IMR-90 (cell line): ENCODE measurements at regions of chr2 and their contacts with region 1.

Region 1: DNA sequence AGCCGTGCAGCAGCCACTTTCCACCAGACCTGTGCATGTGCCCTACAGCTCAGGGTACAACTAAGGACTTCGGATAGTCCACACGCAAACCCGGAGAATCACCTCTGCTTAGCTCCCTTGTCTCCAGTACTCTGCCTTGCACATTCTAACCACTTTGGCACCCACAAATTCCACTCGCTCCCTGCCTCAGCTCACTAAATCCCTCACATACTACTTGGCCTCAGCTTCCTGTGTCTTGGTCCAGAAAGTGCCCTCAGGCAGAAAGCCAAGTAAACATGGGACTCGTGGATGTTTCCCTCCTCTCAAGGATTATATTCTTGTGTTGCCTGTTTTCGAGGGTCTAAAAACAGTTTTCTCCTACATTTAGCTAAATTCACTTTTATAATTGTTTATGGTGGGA is 157.8 kb upstream of the DAPL1 start:
- DNase-seq: no peak
- ATAC-seq: no peak; the same call in 1 of the 2 replicates
- H3K4me3 ChIP-seq: no peak overlapping the region
- H3K27ac ChIP-seq: no peak overlapping the region
- H3K4me1 ChIP-seq: peaks cover 4% of the 10 kb centered on the region; the same call in 1 of the 2 replicates
- H3K27me3 ChIP-seq: no peaks in the 10 kb centered on the region
- CTCF ChIP-seq: no peak
- POLR2A ChIP-seq: no peak
- RAD21 ChIP-seq: no peak

Region 2: GRCh38 chr2:158619496-158619895 is 17.9 kb before region 1 on chr2:
- CTCF ChIA-PET with region 1: interaction called, 3 read pairs
- POLR2A ChIA-PET with region 1: no interaction called
- dilution Hi-C with region 1: no loop called
- in situ Hi-C with region 1: no loop called
- intact Hi-C with region 1: loop called (anchors 2 kb)
- DNase-seq: peak; percentile 57
- ATAC-seq: peak; percentile 74
- H3K4me3 ChIP-seq: no peak overlapping the region
- H3K27ac ChIP-seq: no peak overlapping the region
- H3K4me1 ChIP-seq: no peaks in the 10 kb centered on the region; the same call in 1 of the 2 replicates
- H3K27me3 ChIP-seq: no peaks in the 10 kb centered on the region
- CTCF ChIP-seq: no peak
- POLR2A ChIP-seq: no peak
- RAD21 ChIP-seq: no peak

Region 3: DNA sequence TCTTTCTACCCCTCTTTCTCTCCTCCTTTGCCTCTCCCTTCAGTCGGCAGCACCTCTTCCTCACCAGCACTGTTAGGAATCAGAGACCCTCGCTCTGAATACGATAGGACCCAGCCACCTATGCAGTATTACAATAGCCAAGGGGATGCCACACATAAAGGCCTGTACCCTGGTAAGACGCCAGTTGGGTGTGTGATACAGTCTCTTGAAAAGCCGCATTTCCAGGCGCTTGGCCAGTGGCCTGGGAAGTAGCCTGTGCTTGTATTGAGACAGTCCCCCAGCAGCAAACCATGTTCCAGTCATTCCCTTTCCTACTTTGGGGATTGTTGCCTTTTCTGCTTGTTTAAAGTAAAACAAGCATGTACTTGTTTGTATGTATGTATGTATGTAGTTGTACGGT is 39.3 kb after region 1 on chr2:
- CTCF ChIA-PET with region 1: no interaction called
- POLR2A ChIA-PET with region 1: no interaction called
- dilution Hi-C with region 1: no loop called
- in situ Hi-C with region 1: no loop called
- intact Hi-C with region 1: no loop called
- DNase-seq: no peak
- ATAC-seq: no peak
- H3K4me3 ChIP-seq: no peak overlapping the region
- H3K27ac ChIP-seq: no peak overlapping the region
- H3K4me1 ChIP-seq: no peaks in the 10 kb centered on the region
- H3K27me3 ChIP-seq: no peaks in the 10 kb centered on the region
- CTCF ChIP-seq: no peak
- POLR2A ChIP-seq: no peak
- RAD21 ChIP-seq: no peak

Region 4: GRCh38 chr2:158755310-158756087 is 118.1 kb after region 1 on chr2:
- CTCF ChIA-PET with region 1: no interaction called
- POLR2A ChIA-PET with region 1: no interaction called
- dilution Hi-C with region 1: no loop called
- in situ Hi-C with region 1: no loop called
- intact Hi-C with region 1: no loop called
- DNase-seq: no peak
- ATAC-seq: no peak
- H3K4me3 ChIP-seq: no peak overlapping the region
- H3K27ac ChIP-seq: no peak overlapping the region
- H3K4me1 ChIP-seq: no peaks in the 10 kb centered on the region
- H3K27me3 ChIP-seq: peaks cover 12% of the 10 kb centered on the region
- CTCF ChIP-seq: no peak
- POLR2A ChIP-seq: no peak
- RAD21 ChIP-seq: no peak

Region 5: GRCh38 chr2:159476329-159476728 is 839.0 kb after region 1 on chr2:
- CTCF ChIA-PET with region 1: no interaction called
- POLR2A ChIA-PET with region 1: no interaction called
- dilution Hi-C with region 1: no loop called
- in situ Hi-C with region 1: no loop called
- intact Hi-C with region 1: no loop called
- DNase-seq: peak; percentile 16
- ATAC-seq: peak; percentile 63
- H3K4me3 ChIP-seq: no peak overlapping the region
- H3K27ac ChIP-seq: no peak overlapping the region
- H3K4me1 ChIP-seq: no peaks in the 10 kb centered on the region
- H3K27me3 ChIP-seq: no peaks in the 10 kb centered on the region
- CTCF ChIP-seq: no peak
- POLR2A ChIP-seq: no peak
- RAD21 ChIP-seq: no peak